CD4-positive, alpha-beta memory T cell (primary cell): ENCODE measurements at regions of chr1 and their contacts with region 1.

Region 1: GRCh38 chr1:154936555-154937084 is at the start of gene PMVK:
- DNase-seq: peak; percentile 98 to 99 (median 98)
- H3K4me3 ChIP-seq: peak within 1 kb of the TSS; percentile 51 to 93
- H3K4me3 Mint-ChIP-seq: peak within 1 kb of the TSS; percentile 93 to 99 (median 97)
- H3K27ac ChIP-seq: peak within 1 kb of the TSS; percentile 96
- H3K27ac Mint-ChIP-seq: peak within 1 kb of the TSS; percentile 97 to 100 (median 99)
- H3K4me1 ChIP-seq: peaks cover 54% of the 10 kb centered on the region
- H3K4me1 Mint-ChIP-seq: peaks cover 36 to 70% (median 58%) of the 10 kb centered on the region in 4 donors
- H3K27me3 ChIP-seq: no peaks in the 10 kb centered on the region
- H3K27me3 Mint-ChIP-seq: no peaks in the 10 kb centered on the region
- total RNA-seq, gene PMVK: 17.6 to 21.2 TPM

Region 2: DNA sequence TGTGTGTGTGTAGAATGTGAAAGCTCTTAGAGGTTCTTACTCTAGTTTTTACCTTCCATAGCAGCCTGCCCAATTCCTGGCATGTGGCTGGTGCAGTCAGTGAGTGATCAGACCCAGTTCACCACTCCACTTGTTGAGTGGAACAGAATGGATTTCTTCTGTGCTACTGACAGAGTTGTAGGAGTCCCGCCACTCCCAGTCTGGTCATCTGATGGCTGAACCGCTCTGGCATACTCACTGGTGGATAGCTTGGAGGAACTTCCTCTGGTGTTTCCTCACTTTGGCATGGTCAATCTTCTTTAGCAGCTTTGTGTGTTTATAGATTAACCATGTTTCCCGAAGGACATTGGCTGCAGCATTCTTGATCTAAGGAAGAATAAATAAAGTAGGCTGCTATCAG is 222.0 kb before region 1 on chr1:
- CTCF ChIA-PET with region 1: no interaction called
- POLR2A ChIA-PET with region 1: no interaction called
- intact Hi-C with region 1: no loop called
- DNase-seq: no peak
- H3K4me3 ChIP-seq: no peak overlapping the region
- H3K4me3 Mint-ChIP-seq: no peak overlapping the region
- H3K27ac ChIP-seq: no peak overlapping the region
- H3K27ac Mint-ChIP-seq: peak overlapping the region in 1 of 7 donors; percentile 12
- H3K4me1 ChIP-seq: peaks cover 1% of the 10 kb centered on the region
- H3K4me1 Mint-ChIP-seq: peaks cover 8 to 22% (median 12%) of the 10 kb centered on the region in 4 donors
- H3K27me3 ChIP-seq: no peaks in the 10 kb centered on the region
- H3K27me3 Mint-ChIP-seq: no peaks in the 10 kb centered on the region

Region 3: DNA sequence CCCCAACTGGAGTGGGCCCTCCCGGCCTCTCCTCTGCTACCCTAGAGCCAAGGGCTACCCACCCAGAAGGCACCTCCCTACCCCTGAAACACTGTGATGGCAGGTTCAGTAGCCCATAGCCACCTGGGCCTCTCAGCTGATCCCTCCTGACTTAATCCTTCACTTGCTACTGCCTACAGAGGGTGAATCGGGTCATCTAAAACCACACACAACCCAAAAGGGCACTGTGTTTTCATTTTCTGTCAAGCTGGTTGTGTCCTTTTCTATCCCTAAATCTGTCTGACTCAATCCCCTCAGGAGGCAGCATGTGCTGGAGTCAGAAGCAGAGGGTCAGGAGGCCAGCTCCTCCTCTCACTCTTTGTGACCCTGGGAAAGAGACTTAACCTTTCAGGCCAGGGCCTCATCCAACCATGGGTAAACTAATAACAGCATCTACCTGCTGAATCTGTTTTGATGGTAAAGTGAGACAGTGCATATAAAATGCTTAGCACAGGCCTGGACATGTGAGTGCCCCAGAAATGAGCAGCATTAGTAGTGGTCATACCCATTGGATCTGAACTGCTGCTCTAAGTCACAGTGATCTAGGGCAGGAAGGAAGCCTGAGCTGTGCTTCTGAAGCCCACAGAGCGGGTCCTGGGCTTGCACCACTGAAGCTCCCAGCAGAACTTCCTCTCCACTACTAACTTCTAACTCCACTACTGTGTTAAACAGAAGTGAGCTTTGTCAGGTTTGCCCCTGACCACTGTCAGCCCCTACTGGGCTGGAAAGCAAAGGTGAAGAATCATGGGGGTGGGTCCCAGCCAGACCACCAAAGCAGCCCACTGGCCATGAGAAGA is 11.1 kb before region 1 on chr1:
- CTCF ChIA-PET with region 1: interaction called, 10 read pairs
- POLR2A ChIA-PET with region 1: interaction called, 19 read pairs
- intact Hi-C with region 1: no loop called
- DNase-seq: no peak
- H3K4me3 ChIP-seq: no peak overlapping the region
- H3K4me3 Mint-ChIP-seq: no peak overlapping the region
- H3K27ac ChIP-seq: peak overlapping the region; percentile 18
- H3K27ac Mint-ChIP-seq: peak overlapping the region in 6 of 7 donors; percentile 53 to 82 (median 68)
- H3K4me1 ChIP-seq: peaks cover 13% of the 10 kb centered on the region
- H3K4me1 Mint-ChIP-seq: peaks cover 4 to 17% (median 12%) of the 10 kb centered on the region in 4 donors
- H3K27me3 ChIP-seq: no peaks in the 10 kb centered on the region
- H3K27me3 Mint-ChIP-seq: no peaks in the 10 kb centered on the region

Region 4: DNA sequence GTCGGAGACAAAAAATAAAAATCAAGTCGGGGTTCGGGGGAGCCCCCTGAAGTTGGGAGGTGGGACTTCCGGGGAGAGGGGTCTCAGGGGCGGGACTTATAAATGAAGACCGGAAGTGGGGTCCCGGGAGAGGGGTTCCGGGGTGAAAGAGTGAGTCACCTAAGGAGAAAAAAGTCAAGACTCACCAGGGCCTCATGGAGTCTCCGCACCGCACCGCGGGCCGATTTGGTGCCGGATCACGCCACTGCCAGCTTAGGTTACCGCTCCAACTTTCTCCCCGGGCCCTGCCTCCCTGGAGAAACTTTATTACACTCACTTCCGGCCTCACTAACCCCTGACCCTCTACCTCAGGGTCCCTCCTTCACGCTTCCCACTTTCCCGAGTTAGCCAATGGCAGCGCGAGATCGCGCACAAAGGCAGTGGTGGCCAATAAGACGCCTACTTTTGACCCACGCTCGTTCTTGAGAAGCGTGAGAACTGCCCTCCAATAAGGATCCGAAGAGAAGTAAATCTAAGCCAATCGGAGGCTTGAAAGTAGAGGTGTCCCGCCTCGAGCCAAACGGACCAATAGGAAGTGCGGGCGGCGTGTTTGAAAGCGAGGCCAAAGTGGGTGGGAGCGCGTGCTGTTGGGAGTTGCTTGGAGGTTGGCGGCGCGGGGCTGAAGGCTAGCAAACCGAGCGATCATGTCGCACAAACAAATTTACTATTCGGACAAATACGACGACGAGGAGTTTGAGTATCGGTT is 37.6 kb after region 1 on chr1 and contains the start of gene CKS1B:
- CTCF ChIA-PET with region 1: interaction called, 3 read pairs
- POLR2A ChIA-PET with region 1: interaction called, 36 read pairs
- intact Hi-C with region 1: loop called (anchors 2 kb)
- DNase-seq: peak; percentile 99
- H3K4me3 ChIP-seq: peak within 1 kb of the TSS; percentile 67 to 100
- H3K4me3 Mint-ChIP-seq: no peak within 1 kb of the TSS
- H3K27ac ChIP-seq: peak within 1 kb of the TSS; percentile 95
- H3K27ac Mint-ChIP-seq: no peak within 1 kb of the TSS
- H3K4me1 ChIP-seq: peaks cover 45% of the 10 kb centered on the region
- H3K4me1 Mint-ChIP-seq: peaks cover 22 to 39% (median 26%) of the 10 kb centered on the region in 4 donors
- H3K27me3 ChIP-seq: no peaks in the 10 kb centered on the region
- H3K27me3 Mint-ChIP-seq: no peaks in the 10 kb centered on the region
- total RNA-seq, gene CKS1B: 12.2 to 13.0 TPM

Region 5: GRCh38 chr1:155017041-155017945 is 80.7 kb after region 1 on chr1:
- CTCF ChIA-PET with region 1: interaction called, 9 read pairs
- POLR2A ChIA-PET with region 1: interaction called, 51 read pairs
- intact Hi-C with region 1: no loop called
- DNase-seq: peak; percentile 88 to 91 (median 89)
- H3K4me3 ChIP-seq: peak overlapping the region; percentile 11 to 24
- H3K4me3 Mint-ChIP-seq: peak overlapping the region in 7 of 8 donors; percentile 58 to 86 (median 74)
- H3K27ac ChIP-seq: peak overlapping the region; percentile 86
- H3K27ac Mint-ChIP-seq: peak overlapping the region; percentile 76 to 94 (median 85)
- H3K4me1 ChIP-seq: peaks cover 64% of the 10 kb centered on the region
- H3K4me1 Mint-ChIP-seq: peaks cover 46 to 71% (median 64%) of the 10 kb centered on the region in 4 donors
- H3K27me3 ChIP-seq: no peaks in the 10 kb centered on the region
- H3K27me3 Mint-ChIP-seq: no peaks in the 10 kb centered on the region

Region 6: DNA sequence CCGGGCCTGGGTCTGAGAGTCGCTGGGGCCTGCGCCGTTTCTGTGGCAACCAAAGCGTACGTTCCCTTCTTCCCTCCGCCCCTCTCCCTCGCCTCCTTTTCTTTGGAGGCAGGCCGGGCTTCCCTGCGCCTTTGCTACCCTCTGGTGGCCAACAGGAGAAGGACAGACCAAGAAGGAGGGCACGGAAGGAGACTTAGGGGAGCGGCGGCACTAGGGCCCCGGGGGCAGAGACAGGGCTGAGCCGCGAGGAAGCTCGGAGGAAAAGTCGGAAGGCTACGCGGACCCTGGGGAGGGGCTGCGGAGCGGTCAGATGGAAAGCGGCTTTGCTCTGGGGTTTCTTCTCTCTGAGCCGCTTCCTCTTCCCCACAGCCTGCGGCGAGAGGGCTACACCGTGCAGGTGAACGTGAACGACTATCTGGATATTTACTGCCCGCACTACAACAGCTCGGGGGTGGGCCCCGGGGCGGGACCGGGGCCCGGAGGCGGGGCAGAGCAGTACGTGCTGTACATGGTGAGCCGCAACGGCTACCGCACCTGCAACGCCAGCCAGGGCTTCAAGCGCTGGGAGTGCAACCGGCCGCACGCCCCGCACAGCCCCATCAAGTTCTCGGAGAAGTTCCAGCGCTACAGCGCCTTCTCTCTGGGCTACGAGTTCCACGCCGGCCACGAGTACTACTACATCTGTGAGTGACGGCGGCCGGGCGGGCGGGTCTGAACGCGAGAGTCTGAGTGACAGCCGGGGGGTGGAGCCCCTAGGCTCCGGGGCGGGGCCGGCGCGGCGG is 148.3 kb after region 1 on chr1:
- CTCF ChIA-PET with region 1: interaction called, 10 read pairs
- POLR2A ChIA-PET with region 1: interaction called, 3 read pairs
- intact Hi-C with region 1: no loop called
- DNase-seq: peak; percentile 92 to 96 (median 92)
- H3K4me3 ChIP-seq: peak overlapping the region; percentile 80 to 95
- H3K4me3 Mint-ChIP-seq: peak overlapping the region; percentile 91 to 98 (median 94)
- H3K27ac ChIP-seq: peak overlapping the region; percentile 54
- H3K27ac Mint-ChIP-seq: peak overlapping the region; percentile 88 to 98 (median 94)
- H3K4me1 ChIP-seq: peaks cover 57% of the 10 kb centered on the region
- H3K4me1 Mint-ChIP-seq: peaks cover 22 to 44% (median 34%) of the 10 kb centered on the region in 4 donors
- H3K27me3 ChIP-seq: peaks cover 34% of the 10 kb centered on the region
- H3K27me3 Mint-ChIP-seq: peaks cover 13 to 30% of the 10 kb centered on the region in 2 donors

Region 7: DNA sequence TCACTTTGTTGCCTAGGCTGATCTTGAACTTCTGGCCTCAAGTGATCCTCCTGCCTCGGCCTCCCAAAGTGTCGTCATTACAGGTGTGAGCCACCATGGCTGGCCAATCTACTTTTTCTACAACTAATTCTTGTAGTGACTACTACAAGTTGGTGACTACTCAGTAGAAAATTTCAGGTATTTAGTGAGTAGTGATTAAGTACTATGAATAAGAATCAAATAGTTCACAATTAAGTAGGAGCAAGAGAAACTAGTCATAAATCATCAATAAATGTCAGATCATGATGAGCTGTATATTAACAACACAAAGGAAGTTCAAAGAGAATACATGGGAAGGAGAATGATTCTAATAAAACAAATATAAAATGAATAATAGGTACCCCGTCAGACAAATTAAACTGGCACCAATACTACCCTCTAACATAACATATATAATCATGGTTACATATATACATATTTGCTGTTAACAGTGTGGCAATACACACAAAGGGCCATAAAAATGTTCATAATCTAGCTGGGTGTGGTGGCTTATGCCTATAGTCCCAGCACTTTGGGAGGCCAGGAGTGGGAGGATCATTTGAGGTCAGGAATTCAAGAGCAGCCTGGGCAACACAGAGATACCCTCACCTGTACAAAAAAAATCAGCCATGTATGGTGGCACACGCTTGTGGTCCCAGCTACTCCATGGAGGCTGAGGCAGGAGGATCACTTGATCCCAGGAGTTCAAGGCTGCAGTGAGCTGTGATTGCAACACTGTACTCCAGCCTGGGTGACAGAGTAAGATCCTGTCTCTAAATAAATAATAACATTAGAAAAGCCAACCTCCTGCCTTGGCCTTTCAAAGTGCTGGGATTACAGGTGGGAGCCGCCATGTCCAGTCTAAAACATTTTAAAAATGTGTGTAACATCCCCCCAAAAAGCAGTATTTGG is 732.9 kb after region 1 on chr1:
- CTCF ChIA-PET with region 1: no interaction called
- POLR2A ChIA-PET with region 1: no interaction called
- intact Hi-C with region 1: no loop called
- DNase-seq: no peak
- H3K4me3 ChIP-seq: no peak overlapping the region
- H3K4me3 Mint-ChIP-seq: no peak overlapping the region
- H3K27ac ChIP-seq: no peak overlapping the region
- H3K27ac Mint-ChIP-seq: peak overlapping the region in 2 of 7 donors; percentile 18 to 57
- H3K4me1 ChIP-seq: no peaks in the 10 kb centered on the region
- H3K4me1 Mint-ChIP-seq: peaks cover 0 to 1% (median 0%) of the 10 kb centered on the region in 4 donors
- H3K27me3 ChIP-seq: no peaks in the 10 kb centered on the region
- H3K27me3 Mint-ChIP-seq: no peaks in the 10 kb centered on the region